BJ (cell line): ENCODE measurements at regions of chr1 and their contacts with region 1.

Region 1: GRCh38 chr1:19698181-19698580 is 33.5 kb downstream of the HTR6 start:
- DNase-seq: no peak
- H3K4me3 ChIP-seq: no peak overlapping the region
- H3K27me3 ChIP-seq: no peaks in the 10 kb centered on the region
- CTCF ChIP-seq: no peak

Region 2: GRCh38 chr1:19682257-19682656 is 15.9 kb before region 1 on chr1:
- CTCF ChIA-PET with region 1: interaction called, 19 read pairs
- POLR2A ChIA-PET with region 1: interaction called, 12 read pairs
- DNase-seq: peak; percentile 59
- H3K4me3 ChIP-seq: no peak overlapping the region
- H3K27me3 ChIP-seq: no peaks in the 10 kb centered on the region; the same call in 1 of the 2 replicates
- CTCF ChIP-seq: no peak

Region 3: DNA sequence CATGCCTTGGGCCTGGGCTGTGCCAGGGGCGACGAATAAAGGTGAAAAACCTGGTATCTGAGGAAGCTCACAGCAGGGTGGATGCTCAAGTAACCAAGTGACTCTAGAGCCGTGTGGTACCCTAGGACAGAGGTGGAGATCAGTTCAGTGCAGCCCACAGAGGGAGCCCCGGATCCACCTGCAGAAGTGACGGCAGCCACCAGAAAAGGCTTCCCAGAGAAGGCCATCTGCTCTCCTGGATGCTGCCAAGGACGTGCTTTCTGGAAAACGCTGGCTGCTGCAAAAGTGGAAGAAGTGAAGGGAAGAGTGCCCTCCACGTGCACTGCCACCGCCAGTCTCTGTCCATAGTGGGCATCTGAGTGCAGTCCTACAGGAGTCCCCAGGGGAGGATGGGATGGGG is 73.9 kb after region 1 on chr1:
- CTCF ChIA-PET with region 1: no interaction called
- POLR2A ChIA-PET with region 1: no interaction called
- DNase-seq: no peak
- H3K4me3 ChIP-seq: no peak overlapping the region
- H3K27me3 ChIP-seq: no peaks in the 10 kb centered on the region
- CTCF ChIP-seq: no peak